Mammary epithelial cell (primary cell): ENCODE measurements at regions of chr5 and their contacts with region 1.

Region 1: GRCh38 chr5:139403787-139404483 is at the start of gene SPATA24:
- DNase-seq: peak; percentile 95
- H3K4me3 ChIP-seq: peak within 1 kb of the TSS; percentile 59 to 72 (median 61)
- H3K27ac ChIP-seq: peak within 1 kb of the TSS; percentile 77
- H3K4me1 ChIP-seq: peaks cover 13% of the 10 kb centered on the region
- H3K27me3 ChIP-seq: no peaks in the 10 kb centered on the region
- CTCF ChIP-seq: no peak
- total RNA-seq, gene SPATA24: 3.2 to 5.4 TPM

Region 2: DNA sequence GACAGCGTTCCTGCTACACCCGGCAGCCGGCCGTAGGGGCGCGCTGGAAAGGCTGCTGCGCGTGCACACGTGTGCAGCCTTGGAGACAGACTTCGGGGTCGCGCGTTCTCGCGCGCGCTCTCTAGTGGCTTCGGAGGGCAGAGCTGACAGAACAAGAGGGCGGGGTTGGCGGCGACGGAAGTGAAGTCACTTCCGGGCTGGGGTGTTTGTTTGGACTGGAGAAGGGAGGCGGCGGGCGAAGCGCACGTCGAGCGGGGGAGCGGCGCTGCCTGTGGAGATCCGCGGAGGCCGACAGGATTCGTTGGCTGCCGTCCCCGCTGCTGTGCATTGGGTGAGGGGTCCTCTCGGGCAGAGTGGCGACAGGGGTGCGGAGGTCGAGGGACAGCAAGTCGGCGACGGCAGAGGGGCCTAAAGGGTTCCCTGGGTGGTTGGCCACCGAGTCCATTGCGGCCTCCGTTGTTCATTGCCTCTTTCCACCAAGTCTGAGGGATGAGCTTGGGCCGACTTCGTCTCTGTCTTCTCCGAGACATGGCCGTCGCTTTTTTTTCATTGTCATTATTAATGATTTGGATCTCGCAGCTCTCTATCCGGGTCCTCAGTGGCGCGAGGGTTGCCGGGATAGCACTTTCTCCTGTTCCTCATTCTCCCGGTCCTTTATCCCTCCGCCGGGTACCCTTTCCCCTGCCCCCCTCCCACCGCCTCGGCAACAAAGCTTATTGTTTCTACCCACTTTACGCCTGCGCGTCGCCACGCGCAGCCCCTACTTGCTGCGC is 62.1 kb before region 1 on chr5 and contains the start of gene PAIP2:
- CTCF ChIA-PET with region 1: no interaction called
- dilution Hi-C with region 1: no loop called
- in situ Hi-C with region 1: no loop called
- intact Hi-C with region 1: loop called (anchors 2 kb)
- DNase-seq: peak; percentile 96
- H3K4me3 ChIP-seq: peak within 1 kb of the TSS; percentile 85 to 92 (median 86)
- H3K27ac ChIP-seq: peak within 1 kb of the TSS; percentile 91
- H3K4me1 ChIP-seq: peaks cover 19% of the 10 kb centered on the region
- H3K27me3 ChIP-seq: no peaks in the 10 kb centered on the region
- CTCF ChIP-seq: peak; percentile 51 to 81
- total RNA-seq, gene PAIP2: 38.0 to 43.6 TPM

Region 3: DNA sequence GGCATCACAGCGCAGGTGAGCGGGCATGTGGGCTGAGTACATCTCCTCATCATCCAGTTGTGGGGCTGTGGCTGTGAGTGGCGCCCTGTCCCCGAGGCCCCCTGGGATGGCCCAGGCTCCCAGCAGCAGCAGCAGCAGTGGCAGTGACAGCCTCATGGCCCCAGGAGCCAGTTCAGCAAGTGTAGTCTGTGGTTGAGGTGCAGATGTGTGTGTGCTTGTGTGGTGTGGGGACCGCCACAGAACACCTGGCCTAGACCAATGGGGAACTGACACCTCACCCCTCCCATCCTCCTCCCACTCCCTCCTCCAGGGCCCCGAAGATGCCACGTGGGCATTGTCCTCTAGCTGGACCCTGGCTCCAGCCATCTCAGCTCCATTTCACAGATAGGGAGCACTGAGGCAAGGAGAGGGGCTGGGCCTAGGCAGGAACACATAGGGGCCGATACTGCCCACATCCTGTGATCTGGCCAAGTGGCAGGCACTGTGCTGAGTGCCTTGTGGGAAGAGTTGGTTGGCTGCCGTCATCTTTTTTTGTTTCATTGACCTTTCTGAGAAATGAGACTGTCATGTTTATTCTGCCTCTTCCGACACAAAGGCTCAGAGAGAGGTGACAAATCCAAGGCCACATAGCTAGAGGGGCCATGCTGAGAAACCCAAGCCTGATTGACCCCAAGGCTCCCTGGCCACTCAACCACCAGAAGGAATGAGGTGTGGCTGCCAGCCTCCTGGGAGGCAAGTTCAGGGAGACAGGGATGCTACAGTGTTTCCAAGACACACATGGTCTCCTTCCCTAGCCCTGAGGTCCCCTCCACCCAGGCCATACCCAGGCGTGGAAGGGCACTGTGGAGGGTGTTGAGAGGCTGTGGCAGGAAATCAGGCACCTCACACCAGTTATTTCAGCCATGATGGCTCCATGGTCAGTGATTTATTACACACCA is 14.0 kb before region 1 on chr5 and contains the start of gene MZB1:
- CTCF ChIA-PET with region 1: no interaction called
- dilution Hi-C with region 1: no loop called
- in situ Hi-C with region 1: no loop called
- intact Hi-C with region 1: loop called (anchors 2 kb)
- DNase-seq: no peak
- H3K4me3 ChIP-seq: no peak within 1 kb of the TSS
- H3K27ac ChIP-seq: no peak within 1 kb of the TSS
- H3K4me1 ChIP-seq: peaks cover 26% of the 10 kb centered on the region
- H3K27me3 ChIP-seq: peaks cover 14% of the 10 kb centered on the region
- CTCF ChIP-seq: no peak
- total RNA-seq, gene MZB1: not detected

Region 4: DNA sequence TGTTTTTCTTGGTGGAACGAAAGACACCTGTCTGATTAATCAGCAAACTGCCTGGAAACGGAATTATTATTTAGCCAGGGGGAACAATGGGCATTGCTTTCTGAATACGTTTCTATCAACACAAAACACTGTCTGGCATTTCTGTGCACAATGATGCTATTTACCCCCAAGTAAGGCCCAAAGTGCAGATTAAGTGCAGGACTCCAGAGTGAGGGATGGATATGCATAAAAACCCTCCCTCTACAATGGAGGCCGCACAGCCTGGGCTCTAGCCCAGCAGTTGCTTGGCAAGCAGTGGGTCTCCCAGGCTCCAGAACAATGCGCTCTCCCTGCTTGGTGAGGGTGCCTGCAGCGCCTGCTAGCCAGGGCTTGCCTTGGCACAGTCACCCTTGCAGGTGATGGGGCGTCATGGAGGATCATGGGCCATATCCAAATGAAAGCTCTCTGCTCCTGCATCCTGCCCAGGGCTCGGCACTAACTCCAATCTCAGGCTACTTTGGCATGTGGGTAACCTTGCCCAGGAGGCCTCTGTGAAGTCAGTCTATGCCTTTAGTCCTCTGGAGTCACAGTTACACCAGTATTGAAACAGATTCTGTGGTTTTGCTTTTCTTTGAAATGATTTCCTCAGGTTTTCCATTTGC is 11.4 kb after region 1 on chr5:
- CTCF ChIA-PET with region 1: no interaction called
- dilution Hi-C with region 1: no loop called
- in situ Hi-C with region 1: no loop called
- intact Hi-C with region 1: loop called (anchors 1 kb)
- DNase-seq: peak; percentile 75
- H3K4me3 ChIP-seq: no peak overlapping the region
- H3K27ac ChIP-seq: peak overlapping the region; percentile 52
- H3K4me1 ChIP-seq: peaks cover 18% of the 10 kb centered on the region
- H3K27me3 ChIP-seq: no peaks in the 10 kb centered on the region
- CTCF ChIP-seq: no peak

Region 5: DNA sequence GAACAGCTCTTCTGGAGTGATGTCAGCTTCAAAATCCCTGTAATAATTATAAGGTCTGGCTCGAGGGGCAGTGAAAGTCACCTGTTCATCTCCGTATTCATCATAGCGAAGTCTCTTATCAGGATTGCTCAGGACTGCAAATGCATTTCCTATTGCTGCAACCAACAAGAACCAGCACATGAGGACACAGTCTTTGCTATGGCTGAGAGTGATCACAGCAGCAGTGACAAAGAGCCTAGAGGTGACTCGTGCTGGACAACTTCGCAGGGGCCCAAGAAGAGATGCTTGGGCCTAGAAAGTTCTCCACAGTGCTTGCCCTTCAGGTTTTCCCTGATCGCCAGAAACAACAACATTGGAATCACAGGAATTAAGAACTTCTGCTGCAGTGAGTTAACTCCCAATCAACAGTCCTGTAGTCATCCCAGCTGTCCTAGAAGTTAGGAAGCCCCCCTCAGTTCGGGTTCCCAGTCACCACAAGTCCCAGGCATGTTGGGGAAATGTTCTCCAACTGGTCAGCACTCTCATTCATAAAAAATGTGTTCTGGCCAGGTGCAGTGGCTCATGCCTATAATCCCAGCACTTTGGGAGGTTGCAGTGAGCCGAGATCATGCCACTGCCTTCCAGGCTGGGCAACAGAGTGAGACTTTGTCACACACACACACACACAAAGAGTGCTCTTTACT is 22.4 kb after region 1 on chr5:
- CTCF ChIA-PET with region 1: no interaction called
- dilution Hi-C with region 1: no loop called
- in situ Hi-C with region 1: no loop called
- intact Hi-C with region 1: no loop called
- DNase-seq: peak; percentile 27
- H3K4me3 ChIP-seq: no peak overlapping the region
- H3K27ac ChIP-seq: no peak overlapping the region
- H3K4me1 ChIP-seq: peaks cover 7% of the 10 kb centered on the region
- H3K27me3 ChIP-seq: no peaks in the 10 kb centered on the region
- CTCF ChIP-seq: no peak

Region 6: GRCh38 chr5:139696894-139697658 is 293.1 kb after region 1 on chr5:
- CTCF ChIA-PET with region 1: no interaction called
- dilution Hi-C with region 1: loop called (anchors 10 kb)
- in situ Hi-C with region 1: no loop called
- intact Hi-C with region 1: no loop called
- DNase-seq: peak; percentile 47
- H3K4me3 ChIP-seq: peak overlapping the region in 2 of 3 experiments; percentile 28 to 29
- H3K27ac ChIP-seq: no peak overlapping the region
- H3K4me1 ChIP-seq: peaks cover 17% of the 10 kb centered on the region
- H3K27me3 ChIP-seq: no peaks in the 10 kb centered on the region
- CTCF ChIP-seq: no peak